Activated CD4-positive, alpha-beta memory T cell treated with anti-CD3 and anti-CD28 coated beads for 36 hours (primary cell): ENCODE measurements at regions of chr7 and their contacts with region 1.

Region 1: GRCh38 chr7:105769901-105770628 is 106.3 kb downstream of the ATXN7L1 start:
- DNase-seq: peak; percentile 49
- H3K4me3 Mint-ChIP-seq: no peak overlapping the region
- H3K27ac Mint-ChIP-seq: no peak overlapping the region
- H3K4me1 Mint-ChIP-seq: peaks cover 43% of the 10 kb centered on the region
- H3K27me3 Mint-ChIP-seq: peaks cover 7% of the 10 kb centered on the region

Region 2: GRCh38 chr7:105678811-105679495 is 91.1 kb before region 1 on chr7:
- CTCF ChIA-PET with region 1: no interaction called
- POLR2A ChIA-PET with region 1: no interaction called
- intact Hi-C with region 1: loop called (anchors 2 kb)
- DNase-seq: peak; percentile 54
- H3K4me3 Mint-ChIP-seq: peak overlapping the region; percentile 78
- H3K27ac Mint-ChIP-seq: peak overlapping the region; percentile 95
- H3K4me1 Mint-ChIP-seq: peaks cover 75% of the 10 kb centered on the region
- H3K27me3 Mint-ChIP-seq: no peaks in the 10 kb centered on the region

Region 3: DNA sequence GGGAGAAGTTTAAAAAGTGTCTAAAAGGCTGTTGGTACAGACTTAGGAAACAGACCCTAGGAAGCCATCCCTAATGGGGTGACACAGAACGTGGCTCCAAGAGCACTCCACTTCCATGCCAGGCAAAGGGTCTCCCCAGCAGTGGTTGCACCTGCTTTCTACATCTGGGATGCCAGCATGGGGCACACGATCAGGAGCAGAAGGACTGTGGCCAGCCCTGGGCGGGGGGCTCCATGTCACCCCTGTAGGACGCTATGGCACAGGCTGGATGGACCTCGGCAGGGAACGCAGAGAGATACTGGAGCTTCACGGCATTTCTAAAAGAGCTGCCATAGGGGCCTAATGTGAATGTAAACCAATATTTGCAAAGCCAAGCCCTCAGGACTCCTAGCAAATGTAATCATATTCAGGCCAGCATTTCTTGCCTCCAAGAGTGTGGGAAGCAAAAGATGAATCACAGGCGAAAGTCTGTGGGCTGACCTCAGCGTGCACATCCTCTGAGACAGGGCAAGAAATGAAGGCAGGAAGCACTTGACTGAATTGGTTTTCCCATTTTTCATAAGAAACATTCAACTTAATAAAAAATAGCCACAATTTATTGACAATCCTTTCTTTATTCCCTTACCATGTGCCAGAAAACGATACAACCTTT is 12.5 kb after region 1 on chr7:
- CTCF ChIA-PET with region 1: interaction called, 8 read pairs
- POLR2A ChIA-PET with region 1: interaction called, 5 read pairs
- intact Hi-C with region 1: loop called (anchors 1 kb)
- DNase-seq: peak; percentile 80
- H3K4me3 Mint-ChIP-seq: no peak overlapping the region
- H3K27ac Mint-ChIP-seq: no peak overlapping the region
- H3K4me1 Mint-ChIP-seq: peaks cover 14% of the 10 kb centered on the region
- H3K27me3 Mint-ChIP-seq: no peaks in the 10 kb centered on the region

Region 4: DNA sequence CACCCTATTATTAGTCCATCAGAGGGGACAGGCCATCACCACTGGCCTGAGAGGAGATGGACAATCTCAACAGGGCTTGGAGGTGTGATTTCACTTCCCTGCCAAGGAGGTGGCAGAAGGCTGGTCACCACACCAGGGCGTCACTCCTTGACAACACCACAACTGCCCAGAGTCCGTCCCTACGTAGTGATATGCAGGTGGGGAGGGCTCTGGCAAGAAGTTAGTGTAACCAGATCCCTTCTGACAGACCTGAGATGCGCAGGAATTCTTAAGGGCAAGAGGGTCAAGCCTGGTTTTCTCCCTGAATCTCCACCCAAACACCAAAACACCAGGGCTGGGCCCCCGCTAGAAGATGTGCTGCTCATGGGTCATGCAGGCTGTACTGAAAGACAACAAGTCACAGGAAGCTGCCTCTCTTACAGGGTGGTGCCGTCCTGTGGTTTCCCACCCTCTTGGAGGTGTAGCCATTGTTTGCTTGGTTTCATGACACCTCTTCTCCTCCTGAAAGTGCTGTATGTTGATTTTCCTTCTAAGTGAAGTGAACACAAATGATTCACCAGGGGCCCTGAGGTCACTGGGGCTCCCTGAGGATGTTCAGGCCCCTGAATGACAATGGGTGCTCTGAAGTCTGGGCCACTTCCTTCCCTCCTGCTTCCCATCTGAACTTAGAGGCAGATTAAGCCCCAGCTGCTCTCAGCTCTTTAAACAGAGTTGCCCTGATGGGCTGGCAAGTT is 79.2 kb after region 1 on chr7:
- CTCF ChIA-PET with region 1: interaction called, 9 read pairs
- POLR2A ChIA-PET with region 1: no interaction called
- intact Hi-C with region 1: loop called (anchors 1 kb)
- DNase-seq: peak; percentile 87
- H3K4me3 Mint-ChIP-seq: peak overlapping the region; percentile 11
- H3K27ac Mint-ChIP-seq: peak overlapping the region; percentile 68
- H3K4me1 Mint-ChIP-seq: peaks cover 46% of the 10 kb centered on the region
- H3K27me3 Mint-ChIP-seq: no peaks in the 10 kb centered on the region

Region 5: GRCh38 chr7:105924945-105925344 is 154.9 kb after region 1 on chr7:
- CTCF ChIA-PET with region 1: no interaction called
- POLR2A ChIA-PET with region 1: no interaction called
- intact Hi-C with region 1: loop called (anchors 1 kb)
- DNase-seq: peak; percentile 50
- H3K4me3 Mint-ChIP-seq: no peak overlapping the region
- H3K27ac Mint-ChIP-seq: peak overlapping the region; percentile 53
- H3K4me1 Mint-ChIP-seq: peaks cover 30% of the 10 kb centered on the region
- H3K27me3 Mint-ChIP-seq: peaks cover 2% of the 10 kb centered on the region

Region 6: DNA sequence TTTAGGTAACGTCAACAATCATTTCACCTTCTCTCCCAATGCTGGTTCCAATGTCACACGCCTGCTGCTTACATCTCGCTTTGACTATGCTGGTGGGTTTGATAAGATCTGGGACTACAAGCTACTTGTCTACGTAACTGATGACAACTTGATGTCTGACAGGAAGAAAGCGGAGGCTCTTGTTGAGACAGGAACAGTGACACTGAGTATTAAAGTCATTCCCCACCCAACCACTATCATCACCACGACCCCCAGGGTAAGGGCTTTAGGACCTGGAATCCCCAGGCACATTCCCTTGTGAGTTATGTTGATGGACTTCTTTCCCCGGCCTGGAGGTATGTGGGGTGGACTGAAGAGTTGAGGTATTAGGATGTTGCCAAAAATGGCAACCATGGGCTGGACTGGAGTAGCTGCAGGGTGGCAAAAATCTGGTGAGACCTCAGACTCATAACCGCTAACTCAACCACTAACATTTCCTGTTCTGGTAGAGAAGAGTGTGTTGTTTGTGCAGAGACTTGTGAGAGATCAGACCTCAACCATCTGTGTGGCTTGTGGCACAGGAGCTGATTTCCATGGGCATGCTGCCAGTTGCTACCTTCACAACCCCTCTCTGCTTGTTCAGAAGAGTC is 252.2 kb after region 1 on chr7:
- CTCF ChIA-PET with region 1: interaction called, 7 read pairs
- POLR2A ChIA-PET with region 1: no interaction called
- intact Hi-C with region 1: loop called (anchors 1 kb)
- DNase-seq: peak; percentile 85
- H3K4me3 Mint-ChIP-seq: peak overlapping the region; percentile 14
- H3K27ac Mint-ChIP-seq: peak overlapping the region; percentile 76
- H3K4me1 Mint-ChIP-seq: peaks cover 40% of the 10 kb centered on the region
- H3K27me3 Mint-ChIP-seq: no peaks in the 10 kb centered on the region